PC-9 (cell line): ENCODE measurements at regions of chr1 and their contacts with region 1.

Region 1: GRCh38 chr1:77438236-77438913 is 156.6 kb downstream of the AK5 start:
- DNase-seq: no peak
- H3K4me3 ChIP-seq: no peak overlapping the region
- H3K27ac ChIP-seq: no peak overlapping the region
- H3K4me1 ChIP-seq: no peaks in the 10 kb centered on the region
- H3K27me3 ChIP-seq: no peaks in the 10 kb centered on the region
- CTCF ChIP-seq: no peak

Region 2: GRCh38 chr1:77230051-77230450 is 208.3 kb before region 1 on chr1:
- CTCF ChIA-PET with region 1: no interaction called
- POLR2A ChIA-PET with region 1: no interaction called
- intact Hi-C with region 1: no loop called
- DNase-seq: no peak
- H3K4me3 ChIP-seq: no peak overlapping the region
- H3K27ac ChIP-seq: no peak overlapping the region
- H3K4me1 ChIP-seq: no peaks in the 10 kb centered on the region
- H3K27me3 ChIP-seq: no peaks in the 10 kb centered on the region
- CTCF ChIP-seq: no peak

Region 3: DNA sequence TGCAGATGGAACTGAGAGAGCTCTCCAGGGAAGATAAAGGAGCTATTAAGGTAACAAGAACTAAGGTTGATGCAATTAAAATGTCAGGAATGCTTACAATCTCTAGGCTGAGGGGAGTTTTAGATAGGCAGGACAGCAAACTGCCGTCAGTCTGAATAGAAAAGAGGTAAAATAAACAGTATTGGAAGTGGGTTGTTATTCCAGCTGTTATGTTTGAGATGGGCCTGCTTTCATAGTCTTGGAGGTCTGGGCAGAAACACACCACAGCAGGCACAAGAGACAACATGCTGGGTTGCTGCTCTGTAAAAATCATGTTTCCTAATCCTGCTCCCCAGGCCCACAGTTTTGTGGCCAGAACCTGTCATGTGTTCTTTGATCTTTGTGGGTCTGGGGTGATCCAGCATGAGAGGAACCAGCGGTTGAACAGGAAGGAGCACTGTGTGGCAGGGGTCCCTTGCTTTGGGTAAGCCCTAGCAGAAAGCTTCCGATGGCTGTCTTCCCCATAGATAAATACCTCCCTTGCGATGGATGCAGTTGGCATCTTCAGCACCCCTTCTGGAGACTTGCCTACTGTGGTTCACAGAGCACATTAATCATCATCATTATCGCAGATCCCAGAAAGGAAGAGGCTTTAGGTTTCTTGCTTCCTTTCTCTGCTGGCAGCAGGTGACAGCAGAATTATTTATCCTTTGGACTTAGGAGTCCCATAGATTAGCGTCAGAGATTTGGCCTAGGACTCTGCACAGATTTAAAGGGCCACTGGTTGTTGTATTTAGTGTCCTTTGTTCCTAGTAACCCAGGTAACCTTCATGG is 59.4 kb before region 1 on chr1:
- CTCF ChIA-PET with region 1: no interaction called
- POLR2A ChIA-PET with region 1: interaction called, 12 read pairs
- intact Hi-C with region 1: no loop called
- DNase-seq: no peak
- H3K4me3 ChIP-seq: no peak overlapping the region
- H3K27ac ChIP-seq: no peak overlapping the region
- H3K4me1 ChIP-seq: no peaks in the 10 kb centered on the region
- H3K27me3 ChIP-seq: no peaks in the 10 kb centered on the region
- CTCF ChIP-seq: no peak

Region 4: DNA sequence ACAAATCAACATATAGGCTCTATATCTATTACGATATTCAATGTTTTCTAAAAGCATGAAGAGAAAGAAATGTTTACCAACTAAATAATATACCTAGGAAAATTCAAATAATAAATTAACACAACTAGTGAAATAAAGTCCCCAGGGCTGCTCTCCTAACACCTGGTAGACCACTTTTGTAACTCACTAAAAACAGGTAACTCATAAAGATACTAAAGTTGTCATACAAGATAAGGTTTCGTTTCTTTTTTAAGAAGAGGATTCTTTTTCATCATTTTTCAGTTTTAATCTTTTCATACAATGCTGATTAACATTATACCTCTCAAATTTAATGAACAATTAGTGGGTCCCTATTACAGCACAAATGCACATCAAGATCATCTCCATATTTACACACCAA is 145.1 kb after region 1 on chr1:
- CTCF ChIA-PET with region 1: no interaction called
- POLR2A ChIA-PET with region 1: no interaction called
- intact Hi-C with region 1: no loop called
- DNase-seq: no peak
- H3K4me3 ChIP-seq: no peak overlapping the region
- H3K27ac ChIP-seq: no peak overlapping the region
- H3K4me1 ChIP-seq: no peaks in the 10 kb centered on the region
- H3K27me3 ChIP-seq: no peaks in the 10 kb centered on the region
- CTCF ChIP-seq: no peak